HEK293T (cell line): ENCODE measurements at regions of chr2 and their contacts with region 1.

Region 1: DNA sequence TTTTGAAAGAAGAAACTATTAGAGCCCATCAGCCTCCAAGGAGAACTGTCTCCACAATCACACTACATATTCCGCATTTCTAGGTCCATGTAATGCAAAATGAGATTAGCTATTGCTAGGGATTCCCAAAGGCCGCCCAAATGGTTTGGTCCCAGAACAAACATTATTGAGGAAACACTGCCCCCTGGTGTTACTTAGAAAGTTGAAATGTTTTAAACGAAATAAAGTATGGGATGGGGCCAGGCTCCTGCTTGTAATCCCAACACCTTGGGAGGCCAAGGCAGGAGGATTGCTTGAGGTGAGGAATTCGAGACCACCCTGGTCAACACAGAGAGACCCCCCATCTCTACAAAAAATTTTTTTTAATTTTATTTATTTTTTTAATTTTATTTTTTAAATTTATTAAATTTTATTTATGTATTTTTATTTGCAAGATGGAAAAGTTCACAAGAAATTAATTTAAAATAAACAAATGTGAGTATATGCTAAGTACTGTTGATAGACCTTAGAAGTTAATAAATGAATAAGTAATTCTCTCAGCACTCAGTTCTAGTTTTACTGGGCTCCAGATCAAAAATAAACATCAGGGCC is 5.5 kb downstream of the NHEJ1 start:
- DNase-seq: peak; percentile 63

Region 2: DNA sequence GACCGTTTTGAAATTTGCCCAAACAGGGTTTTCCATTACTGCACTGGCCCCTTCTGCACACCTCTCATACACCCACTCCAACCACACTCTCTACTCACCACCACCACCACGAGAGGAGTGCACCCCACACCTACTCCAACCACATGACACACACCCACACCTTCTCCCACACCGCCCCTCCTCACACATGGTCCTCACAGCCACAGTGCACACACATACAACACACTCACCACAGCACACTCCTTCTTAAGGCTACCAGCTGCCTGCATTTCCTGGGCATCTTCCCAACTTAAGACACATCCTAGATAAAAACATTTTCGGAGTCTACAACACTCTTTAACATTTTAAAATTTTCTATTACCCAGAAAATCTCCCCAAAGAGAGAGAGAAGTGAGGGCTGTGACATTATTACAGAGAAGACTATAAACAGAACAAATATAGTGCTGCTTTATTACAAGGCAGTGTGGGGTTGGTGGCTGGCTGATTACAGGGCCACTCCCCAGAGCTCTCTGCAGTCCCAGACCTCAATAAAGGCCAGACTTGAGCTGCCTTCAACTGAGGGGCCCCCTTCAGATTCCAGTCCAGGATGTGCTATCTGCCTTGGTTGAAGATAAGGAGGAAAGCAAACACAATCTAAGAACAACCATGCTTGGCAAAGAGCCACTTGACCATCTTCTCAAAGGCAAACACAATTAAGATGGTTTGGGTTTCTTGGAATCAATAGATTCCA is 30.6 kb before region 1 on chr2:
- CTCF ChIA-PET with region 1: interaction called, 20 read pairs
- POLR2A ChIA-PET with region 1: no interaction called
- DNase-seq: no peak

Region 3: DNA sequence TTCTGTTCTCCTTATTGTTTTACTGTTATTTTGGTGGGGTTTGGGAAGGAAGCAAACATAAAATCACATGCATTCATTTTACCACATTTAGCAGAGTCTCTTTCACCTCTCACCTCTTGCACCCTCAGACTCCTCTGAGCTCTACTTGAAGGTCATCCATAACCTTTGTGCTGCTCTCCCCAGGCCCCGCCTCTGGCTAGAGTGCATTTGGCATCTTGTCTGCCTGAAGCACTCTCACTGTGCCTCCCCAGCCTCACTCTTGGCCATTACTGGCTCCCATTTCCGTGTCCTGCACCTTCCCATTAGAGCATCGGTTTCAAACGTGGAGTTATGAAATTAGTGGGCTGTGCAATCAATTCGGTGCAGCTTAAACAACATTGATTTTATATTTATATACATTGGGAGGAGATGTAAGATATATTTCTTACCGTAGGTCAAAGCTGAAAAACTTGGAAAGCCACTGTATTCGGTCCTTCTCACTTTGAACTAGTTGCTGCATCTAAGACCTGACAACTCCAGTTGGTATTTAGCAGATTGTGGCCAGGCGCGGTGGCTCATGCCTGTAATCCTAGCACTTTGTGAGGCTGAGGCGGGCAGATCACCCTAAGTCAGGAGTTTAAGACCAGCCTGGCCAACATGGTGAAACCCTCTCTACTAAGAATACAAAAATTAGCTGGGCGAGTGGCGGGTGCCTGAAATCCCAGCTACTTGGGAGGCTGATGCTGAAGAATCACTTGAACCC is 44.5 kb after region 1 on chr2:
- CTCF ChIA-PET with region 1: no interaction called
- POLR2A ChIA-PET with region 1: no interaction called
- DNase-seq: no peak